MCF 10A (cell line): ENCODE measurements at regions of chr1 and their contacts with region 1.

Region 1: GRCh38 chr1:234326497-234327366 is 46.5 kb upstream of the COA6 start:
- DNase-seq: peak; percentile 82
- H3K4me3 Mint-ChIP-seq: no peak overlapping the region
- H3K27ac Mint-ChIP-seq: no peak overlapping the region
- H3K4me1 Mint-ChIP-seq: peaks cover 6% of the 10 kb centered on the region
- H3K27me3 Mint-ChIP-seq: peaks cover 14% of the 10 kb centered on the region
- CTCF ChIP-seq: peak; percentile 84

Region 2: GRCh38 chr1:233394860-233395717 is 931.6 kb before region 1 on chr1:
- CTCF ChIA-PET with region 1: interaction called, 4 read pairs
- POLR2A ChIA-PET with region 1: no interaction called
- intact Hi-C with region 1: loop called (anchors 10 kb)
- DNase-seq: peak; percentile 81
- H3K4me3 Mint-ChIP-seq: no peak overlapping the region
- H3K27ac Mint-ChIP-seq: no peak overlapping the region
- H3K4me1 Mint-ChIP-seq: no peaks in the 10 kb centered on the region
- H3K27me3 Mint-ChIP-seq: no peaks in the 10 kb centered on the region
- CTCF ChIP-seq: peak; percentile 98

Region 3: GRCh38 chr1:234149217-234149616 is 177.5 kb before region 1 on chr1:
- CTCF ChIA-PET with region 1: interaction called, 15 read pairs
- POLR2A ChIA-PET with region 1: no interaction called
- intact Hi-C with region 1: loop called (anchors 1 kb)
- DNase-seq: peak; percentile 53
- H3K4me3 Mint-ChIP-seq: no peak overlapping the region
- H3K27ac Mint-ChIP-seq: no peak overlapping the region
- H3K4me1 Mint-ChIP-seq: peaks cover 17% of the 10 kb centered on the region
- H3K27me3 Mint-ChIP-seq: no peaks in the 10 kb centered on the region
- CTCF ChIP-seq: no peak

Region 4: DNA sequence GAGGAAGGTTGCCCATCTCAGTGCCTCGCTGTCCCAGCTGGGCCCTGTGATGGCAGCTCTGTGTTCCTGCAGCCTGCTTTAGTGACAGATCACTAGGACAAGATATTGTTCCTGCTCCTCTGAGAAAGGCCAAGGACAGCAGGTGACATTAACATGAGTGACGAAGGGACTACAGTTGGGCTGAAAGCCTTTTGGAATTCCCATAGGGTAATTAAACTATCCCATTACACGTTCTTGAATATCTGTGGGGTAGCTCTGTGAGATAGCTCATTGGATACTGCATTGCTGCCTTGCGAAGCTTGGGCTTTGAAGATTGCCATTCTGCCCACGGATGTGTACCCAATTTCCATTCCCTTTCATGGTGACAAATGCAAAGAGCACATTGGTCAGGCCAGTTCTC is 31.7 kb before region 1 on chr1:
- CTCF ChIA-PET with region 1: interaction called, 12 read pairs
- POLR2A ChIA-PET with region 1: no interaction called
- intact Hi-C with region 1: no loop called
- DNase-seq: no peak
- H3K4me3 Mint-ChIP-seq: no peak overlapping the region
- H3K27ac Mint-ChIP-seq: no peak overlapping the region
- H3K4me1 Mint-ChIP-seq: no peaks in the 10 kb centered on the region
- H3K27me3 Mint-ChIP-seq: no peaks in the 10 kb centered on the region
- CTCF ChIP-seq: no peak

Region 5: GRCh38 chr1:234342774-234343173 is 16.0 kb after region 1 on chr1:
- CTCF ChIA-PET with region 1: interaction called, 56 read pairs
- POLR2A ChIA-PET with region 1: interaction called, 3 read pairs
- intact Hi-C with region 1: no loop called
- DNase-seq: no peak
- H3K4me3 Mint-ChIP-seq: no peak overlapping the region
- H3K27ac Mint-ChIP-seq: no peak overlapping the region
- H3K4me1 Mint-ChIP-seq: no peaks in the 10 kb centered on the region
- H3K27me3 Mint-ChIP-seq: no peaks in the 10 kb centered on the region
- CTCF ChIP-seq: no peak

Region 6: DNA sequence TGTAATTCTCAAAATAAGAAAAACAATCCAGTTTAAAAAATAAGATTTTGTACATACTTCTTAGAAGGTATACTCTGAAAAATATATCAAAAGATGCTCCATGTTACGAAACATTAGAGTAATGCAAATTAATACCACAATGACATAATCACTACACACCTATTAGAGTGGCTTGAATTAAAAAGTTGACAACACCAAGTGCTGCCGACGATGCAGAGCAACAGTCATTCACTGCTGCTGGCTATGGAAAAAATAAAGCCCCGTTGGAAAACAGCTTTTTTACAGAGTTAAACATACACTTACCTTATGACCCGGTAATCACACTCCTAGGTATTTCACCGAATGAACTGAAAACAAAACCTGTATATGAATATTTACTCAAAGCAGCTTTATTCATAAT is 61.4 kb after region 1 on chr1:
- CTCF ChIA-PET with region 1: no interaction called
- POLR2A ChIA-PET with region 1: no interaction called
- intact Hi-C with region 1: no loop called
- DNase-seq: no peak
- H3K4me3 Mint-ChIP-seq: no peak overlapping the region
- H3K27ac Mint-ChIP-seq: no peak overlapping the region
- H3K4me1 Mint-ChIP-seq: no peaks in the 10 kb centered on the region
- H3K27me3 Mint-ChIP-seq: no peaks in the 10 kb centered on the region
- CTCF ChIP-seq: no peak

Region 7: DNA sequence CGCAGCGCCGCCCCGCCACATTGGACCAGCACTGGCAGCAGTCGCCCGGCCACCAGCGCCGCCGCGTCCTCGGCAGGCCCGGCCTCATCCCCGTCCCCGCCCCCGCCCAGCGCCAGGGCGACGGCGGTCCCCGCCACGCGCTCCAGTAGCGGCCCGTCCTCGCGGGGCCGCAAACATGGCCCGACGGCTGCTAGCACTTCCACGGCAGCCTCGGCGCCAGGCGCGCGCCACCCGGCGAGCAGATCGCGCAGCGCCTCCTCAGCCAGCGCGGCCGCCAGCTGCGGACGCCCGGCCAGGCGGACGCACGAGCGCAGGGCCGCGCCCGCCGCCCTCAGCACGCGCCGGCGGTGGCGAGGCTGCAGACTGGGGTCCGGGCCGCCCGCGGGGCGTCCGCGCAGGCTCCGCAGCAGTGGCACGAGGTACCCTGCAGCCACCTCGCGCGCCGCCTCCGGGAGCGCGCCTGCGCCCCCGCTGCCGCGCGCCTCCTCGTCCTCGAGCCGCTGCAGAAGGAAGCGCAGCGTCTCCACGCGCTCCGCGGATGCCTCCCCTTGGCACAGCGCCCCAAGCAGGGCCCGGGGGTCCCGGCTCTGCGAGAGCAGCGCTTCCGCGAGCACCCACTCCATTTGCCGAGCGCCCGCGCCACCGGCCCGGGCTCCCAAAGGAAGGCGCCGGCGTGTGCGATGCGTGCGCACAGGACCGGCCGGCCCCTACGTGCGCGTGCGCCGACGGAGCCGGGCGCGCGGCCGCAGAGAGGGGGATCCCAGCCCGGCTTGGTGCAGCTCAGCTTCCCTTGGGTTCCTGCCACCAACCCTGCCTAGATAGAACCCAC is 152.0 kb after region 1 on chr1 and contains the start of gene TARBP1:
- CTCF ChIA-PET with region 1: no interaction called
- POLR2A ChIA-PET with region 1: no interaction called
- intact Hi-C with region 1: loop called (anchors 10 kb)
- DNase-seq: peak; percentile 89
- H3K4me3 Mint-ChIP-seq: peak within 1 kb of the TSS; percentile 77
- H3K27ac Mint-ChIP-seq: no peak within 1 kb of the TSS
- H3K4me1 Mint-ChIP-seq: peaks cover 31% of the 10 kb centered on the region
- H3K27me3 Mint-ChIP-seq: peaks cover 23% of the 10 kb centered on the region
- CTCF ChIP-seq: no peak
- total RNA-seq, gene TARBP1: 45.5 and 52.5 TPM in 2 replicates

Region 8: GRCh38 chr1:234573711-234574299 is 247.1 kb after region 1 on chr1:
- CTCF ChIA-PET with region 1: no interaction called
- POLR2A ChIA-PET with region 1: no interaction called
- intact Hi-C with region 1: no loop called
- DNase-seq: peak; percentile 77
- H3K4me3 Mint-ChIP-seq: no peak overlapping the region
- H3K27ac Mint-ChIP-seq: no peak overlapping the region
- H3K4me1 Mint-ChIP-seq: peaks cover 17% of the 10 kb centered on the region
- H3K27me3 Mint-ChIP-seq: no peaks in the 10 kb centered on the region
- CTCF ChIP-seq: no peak

Region 9: DNA sequence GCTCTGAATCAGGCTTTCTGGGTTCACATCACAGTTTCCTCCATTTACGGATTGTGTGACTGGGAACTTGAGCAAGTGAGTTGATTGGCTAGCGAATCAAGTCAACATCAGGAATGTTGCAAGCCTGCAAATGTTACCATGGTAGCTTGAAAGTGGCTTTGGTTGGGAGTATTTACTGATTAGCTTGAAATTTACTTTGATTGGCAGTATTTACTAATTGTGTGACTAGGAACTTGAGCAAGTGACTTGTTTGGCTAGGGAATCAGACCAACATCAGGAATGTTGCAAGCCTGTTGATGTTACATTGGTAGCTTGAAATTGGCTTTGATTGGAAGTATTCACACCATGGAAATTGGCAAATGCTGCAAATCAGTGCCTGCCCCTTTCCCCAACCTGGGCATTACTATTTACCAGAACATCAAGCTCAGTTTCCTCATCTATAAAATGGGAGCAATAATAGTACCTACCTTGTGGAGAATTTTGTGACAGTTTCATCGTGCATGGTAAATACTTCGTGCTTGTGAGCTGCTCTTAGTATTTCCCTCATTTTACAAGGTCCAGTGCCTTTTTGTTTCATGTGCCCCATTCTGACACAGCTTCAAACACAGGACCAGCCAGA is 1200.6 kb after region 1 on chr1:
- CTCF ChIA-PET with region 1: no interaction called
- POLR2A ChIA-PET with region 1: no interaction called
- intact Hi-C with region 1: no loop called
- DNase-seq: no peak
- H3K4me3 Mint-ChIP-seq: no peak overlapping the region
- H3K27ac Mint-ChIP-seq: no peak overlapping the region
- H3K4me1 Mint-ChIP-seq: peaks cover 11% of the 10 kb centered on the region
- H3K27me3 Mint-ChIP-seq: no peaks in the 10 kb centered on the region
- CTCF ChIP-seq: no peak